Caco-2 (cell line): ENCODE measurements at regions of chr18 and their contacts with region 1.

Region 1: GRCh38 chr18:55856229-55856628 is 268.2 kb upstream of the TCF4 start:
- DNase-seq: peak; percentile 46 to 49
- H3K4me3 ChIP-seq: no peak overlapping the region
- H3K4me3 Mint-ChIP-seq: no peak overlapping the region
- H3K27ac Mint-ChIP-seq: peak overlapping the region; percentile 1
- H3K4me1 ChIP-seq: peaks cover 15% of the 10 kb centered on the region
- H3K4me1 Mint-ChIP-seq: peaks cover 25% of the 10 kb centered on the region
- H3K27me3 ChIP-seq: no peaks in the 10 kb centered on the region
- H3K27me3 Mint-ChIP-seq: no peaks in the 10 kb centered on the region
- CTCF ChIP-seq: no peak

Region 2: GRCh38 chr18:55605733-55606338 is 250.4 kb before region 1 on chr18:
- CTCF ChIA-PET with region 1: no interaction called
- POLR2A ChIA-PET with region 1: no interaction called
- intact Hi-C with region 1: no loop called
- DNase-seq: no peak
- H3K4me3 ChIP-seq: no peak overlapping the region
- H3K4me3 Mint-ChIP-seq: no peak overlapping the region
- H3K27ac Mint-ChIP-seq: no peak overlapping the region
- H3K4me1 ChIP-seq: no peaks in the 10 kb centered on the region
- H3K4me1 Mint-ChIP-seq: no peaks in the 10 kb centered on the region
- H3K27me3 ChIP-seq: no peaks in the 10 kb centered on the region
- H3K27me3 Mint-ChIP-seq: no peaks in the 10 kb centered on the region
- CTCF ChIP-seq: no peak

Region 3: DNA sequence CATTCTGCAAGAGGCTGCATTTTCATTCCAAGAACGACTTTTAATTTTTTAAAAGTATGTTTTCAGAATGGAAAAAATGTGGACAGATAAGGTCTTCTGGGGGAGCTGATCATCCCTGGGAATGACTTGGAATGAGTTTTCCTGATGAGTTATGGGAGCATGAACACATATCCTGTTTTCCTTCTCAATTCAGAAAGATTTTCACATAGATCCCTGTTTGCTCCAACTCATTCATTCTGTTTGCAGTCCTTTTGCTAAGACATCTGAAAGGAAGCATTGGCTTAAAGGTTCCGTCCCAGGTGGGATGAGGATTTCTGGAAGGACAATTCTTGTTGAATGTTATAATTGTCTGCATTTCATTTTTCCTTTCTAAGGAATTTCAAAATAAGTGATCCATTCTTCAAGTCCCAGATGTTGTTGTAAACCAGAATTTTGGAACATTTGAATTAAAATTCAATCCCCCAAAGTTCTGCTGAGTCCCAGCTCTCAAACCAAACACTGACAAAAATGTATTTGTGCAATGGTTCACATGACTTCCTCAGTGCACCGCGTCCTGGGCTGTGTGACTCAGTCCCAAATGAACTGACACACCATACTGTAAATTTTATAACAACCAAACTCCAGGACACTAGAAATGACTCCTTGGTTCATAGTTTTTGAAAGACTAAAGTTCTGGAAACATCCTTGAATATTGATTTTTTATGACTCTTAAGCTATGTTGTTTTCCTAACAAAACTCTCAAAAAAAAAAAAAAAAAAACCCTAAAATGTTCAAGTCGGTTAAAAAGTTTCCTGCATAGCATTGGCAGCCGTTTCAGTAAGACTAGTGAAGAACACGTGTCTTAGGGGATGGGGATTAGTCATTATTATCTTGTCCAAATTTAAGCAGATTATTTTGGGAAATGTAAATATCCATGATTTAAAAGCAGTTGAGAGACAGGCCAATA is 13.6 kb after region 1 on chr18:
- CTCF ChIA-PET with region 1: no interaction called
- POLR2A ChIA-PET with region 1: interaction called, 11 read pairs
- intact Hi-C with region 1: no loop called
- DNase-seq: no peak
- H3K4me3 ChIP-seq: no peak overlapping the region
- H3K4me3 Mint-ChIP-seq: no peak overlapping the region
- H3K27ac Mint-ChIP-seq: no peak overlapping the region
- H3K4me1 ChIP-seq: no peaks in the 10 kb centered on the region
- H3K4me1 Mint-ChIP-seq: no peaks in the 10 kb centered on the region
- H3K27me3 ChIP-seq: no peaks in the 10 kb centered on the region
- H3K27me3 Mint-ChIP-seq: no peaks in the 10 kb centered on the region
- CTCF ChIP-seq: no peak

Region 4: GRCh38 chr18:55897091-55897689 is 41.0 kb after region 1 on chr18:
- CTCF ChIA-PET with region 1: no interaction called
- POLR2A ChIA-PET with region 1: no interaction called
- intact Hi-C with region 1: no loop called
- DNase-seq: no peak
- H3K4me3 ChIP-seq: no peak overlapping the region
- H3K4me3 Mint-ChIP-seq: no peak overlapping the region
- H3K27ac Mint-ChIP-seq: no peak overlapping the region
- H3K4me1 ChIP-seq: no peaks in the 10 kb centered on the region; the same call in 1 of the 2 replicates
- H3K4me1 Mint-ChIP-seq: no peaks in the 10 kb centered on the region
- H3K27me3 ChIP-seq: no peaks in the 10 kb centered on the region
- H3K27me3 Mint-ChIP-seq: no peaks in the 10 kb centered on the region
- CTCF ChIP-seq: no peak

Region 5: DNA sequence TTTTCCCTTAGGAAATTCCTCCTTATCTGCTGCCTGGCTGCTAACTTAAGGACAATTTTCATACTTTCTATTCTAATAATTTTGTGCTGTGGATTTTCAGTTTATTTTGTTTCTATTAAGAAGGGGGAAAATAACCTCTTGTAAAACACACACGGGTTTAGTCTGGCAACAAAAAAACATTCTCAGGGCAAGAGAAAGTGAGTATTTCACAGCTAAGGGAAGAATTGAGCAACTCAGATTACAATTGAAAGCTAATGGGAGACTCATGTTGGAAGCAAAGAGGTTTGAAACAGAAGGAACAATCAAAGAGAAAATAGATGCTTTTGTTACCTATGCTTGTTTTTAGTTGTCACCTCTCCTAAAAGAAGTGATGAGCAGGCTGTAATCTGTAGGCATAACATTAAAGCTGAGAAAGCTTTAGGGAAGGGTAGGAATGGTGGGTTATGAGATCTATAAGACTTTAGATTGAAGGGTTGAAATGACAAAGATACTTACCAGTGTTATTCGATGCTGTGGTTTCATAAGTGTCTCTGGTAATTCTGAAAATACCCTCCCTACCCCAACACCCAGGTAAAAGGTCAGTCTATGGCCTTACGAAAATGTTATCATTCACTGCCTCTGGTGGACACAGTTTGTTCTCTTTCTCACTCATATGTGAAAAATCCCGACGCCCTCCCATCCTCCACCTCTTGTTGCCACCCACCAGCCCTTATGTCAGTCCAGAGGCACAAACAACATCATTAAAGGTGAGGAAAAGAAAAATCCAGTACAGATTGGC is 271.3 kb after region 1 on chr18:
- CTCF ChIA-PET with region 1: no interaction called
- POLR2A ChIA-PET with region 1: no interaction called
- intact Hi-C with region 1: no loop called
- DNase-seq: no peak
- H3K4me3 ChIP-seq: no peak overlapping the region
- H3K4me3 Mint-ChIP-seq: no peak overlapping the region
- H3K27ac Mint-ChIP-seq: no peak overlapping the region
- H3K4me1 ChIP-seq: no peaks in the 10 kb centered on the region
- H3K4me1 Mint-ChIP-seq: no peaks in the 10 kb centered on the region
- H3K27me3 ChIP-seq: no peaks in the 10 kb centered on the region
- H3K27me3 Mint-ChIP-seq: no peaks in the 10 kb centered on the region
- CTCF ChIP-seq: no peak